ENCODE measurements at regions of chr15 and their contacts with region 1.

Region 1: GRCh38 chr15:92077353-92078085 is 224.0 kb downstream of the SLCO3A1 start:
- DNase-seq: peak; percentile 45 to 56
- ATAC-seq: peak; percentile 65 to 72
- H3K4me3 ChIP-seq: no peak overlapping the region
- H3K27ac ChIP-seq: no peak overlapping the region
- H3K4me1 ChIP-seq: peaks cover 7 to 9% of the 10 kb centered on the region in 2 donors
- H3K27me3 ChIP-seq: no peaks in the 10 kb centered on the region
- CTCF ChIP-seq: peak; percentile 45 to 68 (median 66)
- POLR2A ChIP-seq: no peak

Region 2: DNA sequence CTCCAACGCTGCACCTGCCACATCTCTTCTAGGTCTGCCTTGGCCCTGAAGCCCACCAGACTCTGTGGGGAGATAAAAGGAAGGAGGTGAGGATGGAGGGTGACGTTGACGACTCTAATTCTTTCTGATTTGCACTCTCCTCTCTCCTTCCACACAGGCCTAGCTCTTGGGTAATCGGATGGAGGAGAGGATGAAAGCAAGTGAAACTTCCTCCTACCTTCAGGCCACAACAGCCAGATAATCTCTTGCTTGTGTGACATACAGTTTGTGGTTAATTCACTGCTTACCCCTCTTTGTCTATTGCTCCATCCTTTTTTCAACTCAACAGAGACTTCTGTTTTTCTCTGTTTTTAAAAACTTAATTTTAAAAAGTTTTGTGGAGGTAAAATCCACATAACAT is 769.3 kb before region 1 on chr15:
- in situ Hi-C with region 1: loop called (anchors 5 to 10 kb)
- intact Hi-C with region 1: loop called (anchors 2 kb)
- DNase-seq: no peak
- ATAC-seq: no peak
- H3K4me3 ChIP-seq: no peak overlapping the region
- H3K27ac ChIP-seq: no peak overlapping the region
- H3K4me1 ChIP-seq: no peaks in the 10 kb centered on the region
- H3K27me3 ChIP-seq: peaks cover 2 to 18% (median 6%) of the 10 kb centered on the region in 3 donors
- CTCF ChIP-seq: no peak
- POLR2A ChIP-seq: no peak

Region 3: DNA sequence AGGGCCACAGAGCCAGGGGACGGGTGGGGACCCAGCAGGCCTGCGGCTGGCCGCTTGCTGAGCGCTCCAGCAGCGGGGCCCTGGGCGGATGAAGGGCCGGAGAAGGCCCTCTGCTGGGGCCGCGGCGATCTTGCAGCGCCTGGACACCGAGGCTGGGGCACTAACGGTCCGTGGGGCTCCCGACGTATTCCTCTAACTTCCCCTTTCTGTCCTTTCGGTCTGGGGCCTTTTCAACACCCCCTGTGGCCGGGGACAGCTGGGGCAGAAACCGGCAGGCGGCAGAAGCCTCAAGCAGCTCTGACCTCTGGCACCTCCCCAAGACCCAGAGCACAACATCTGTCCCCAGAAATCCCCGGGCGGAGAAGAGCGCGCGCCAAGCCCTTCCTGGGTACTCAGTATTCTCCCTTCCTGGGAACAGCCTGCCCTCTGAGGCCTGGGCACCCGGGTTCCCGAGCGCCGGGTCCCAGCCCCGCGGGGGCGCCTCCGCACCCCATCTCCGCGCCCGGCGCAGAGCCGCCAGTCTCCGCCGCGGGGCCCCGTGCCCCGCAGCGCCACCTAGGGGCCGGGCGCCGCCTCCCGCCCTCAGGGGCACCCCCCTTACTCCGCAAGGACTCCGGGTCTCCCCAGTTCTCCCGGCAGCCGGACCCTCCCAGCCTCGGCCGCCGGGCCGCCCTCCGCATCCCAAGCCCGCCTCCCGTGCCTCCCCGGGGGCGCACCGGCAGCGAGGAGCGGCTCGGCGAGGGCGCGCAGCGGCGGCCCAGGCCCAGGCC is 224.6 kb before region 1 on chr15:
- in situ Hi-C with region 1: loop called in 3 of 4 experiments (anchors 5 to 25 kb)
- intact Hi-C with region 1: loop called (anchors 1 kb)
- DNase-seq: peak; percentile 56 to 72
- ATAC-seq: peak; percentile 88
- H3K4me3 ChIP-seq: peak overlapping the region; percentile 56 to 84 (median 72)
- H3K27ac ChIP-seq: peak overlapping the region; percentile 78 to 89 (median 86)
- H3K4me1 ChIP-seq: peaks cover 11 to 22% of the 10 kb centered on the region in 2 donors
- H3K27me3 ChIP-seq: no peaks in the 10 kb centered on the region
- CTCF ChIP-seq: peak; percentile 61 to 94 (median 84)
- POLR2A ChIP-seq: no peak

Region 4: DNA sequence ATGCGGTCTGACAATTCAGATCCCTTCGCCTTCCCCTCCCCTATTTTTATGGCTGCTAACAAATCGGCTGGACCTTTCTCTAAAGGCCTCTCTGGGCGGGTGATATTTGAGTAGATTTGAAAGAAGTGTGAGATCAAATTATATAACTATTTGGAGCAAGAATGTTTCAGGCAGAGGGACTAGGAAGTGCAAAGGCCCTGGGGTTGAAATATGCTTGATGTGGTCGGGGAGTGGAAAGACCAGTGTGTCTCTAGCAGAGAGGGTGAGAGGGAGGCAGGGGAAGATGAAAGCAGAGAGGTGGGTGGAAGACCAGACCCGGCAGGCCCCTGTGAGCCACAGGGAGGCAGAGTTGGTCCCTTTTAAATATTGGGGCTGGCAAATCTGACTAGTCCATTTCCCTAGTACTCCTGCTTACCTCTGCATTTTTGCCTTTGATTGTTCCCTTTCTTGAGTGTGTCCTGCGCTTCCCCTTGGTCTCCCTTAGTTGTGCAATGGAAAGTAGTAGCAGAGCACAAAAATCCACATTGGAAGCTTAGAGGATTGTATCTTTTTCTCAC is 191.7 kb before region 1 on chr15:
- in situ Hi-C with region 1: no loop called
- intact Hi-C with region 1: loop called (anchors 10 kb)
- DNase-seq: no peak
- ATAC-seq: no peak
- H3K4me3 ChIP-seq: no peak overlapping the region
- H3K27ac ChIP-seq: no peak overlapping the region
- H3K4me1 ChIP-seq: peaks cover 14 to 15% of the 10 kb centered on the region in 2 donors
- H3K27me3 ChIP-seq: no peaks in the 10 kb centered on the region
- CTCF ChIP-seq: peak in 1 of 5 experiments; percentile 10
- POLR2A ChIP-seq: no peak

Region 5: GRCh38 chr15:91965501-91966184 is 111.9 kb before region 1 on chr15:
- in situ Hi-C with region 1: no loop called
- intact Hi-C with region 1: no loop called
- DNase-seq: no peak
- ATAC-seq: no peak
- H3K4me3 ChIP-seq: no peak overlapping the region
- H3K27ac ChIP-seq: peak overlapping the region in 2 of 4 donors; percentile 13 to 23
- H3K4me1 ChIP-seq: peaks cover 30 to 36% of the 10 kb centered on the region in 2 donors
- H3K27me3 ChIP-seq: no peaks in the 10 kb centered on the region
- CTCF ChIP-seq: no peak
- POLR2A ChIP-seq: no peak

Region 6: GRCh38 chr15:92000709-92001108 is 76.8 kb before region 1 on chr15:
- in situ Hi-C with region 1: no loop called
- intact Hi-C with region 1: no loop called
- DNase-seq: no peak
- ATAC-seq: no peak
- H3K4me3 ChIP-seq: no peak overlapping the region
- H3K27ac ChIP-seq: no peak overlapping the region
- H3K4me1 ChIP-seq: no peaks in the 10 kb centered on the region
- H3K27me3 ChIP-seq: no peaks in the 10 kb centered on the region
- CTCF ChIP-seq: no peak
- POLR2A ChIP-seq: no peak

Region 7: DNA sequence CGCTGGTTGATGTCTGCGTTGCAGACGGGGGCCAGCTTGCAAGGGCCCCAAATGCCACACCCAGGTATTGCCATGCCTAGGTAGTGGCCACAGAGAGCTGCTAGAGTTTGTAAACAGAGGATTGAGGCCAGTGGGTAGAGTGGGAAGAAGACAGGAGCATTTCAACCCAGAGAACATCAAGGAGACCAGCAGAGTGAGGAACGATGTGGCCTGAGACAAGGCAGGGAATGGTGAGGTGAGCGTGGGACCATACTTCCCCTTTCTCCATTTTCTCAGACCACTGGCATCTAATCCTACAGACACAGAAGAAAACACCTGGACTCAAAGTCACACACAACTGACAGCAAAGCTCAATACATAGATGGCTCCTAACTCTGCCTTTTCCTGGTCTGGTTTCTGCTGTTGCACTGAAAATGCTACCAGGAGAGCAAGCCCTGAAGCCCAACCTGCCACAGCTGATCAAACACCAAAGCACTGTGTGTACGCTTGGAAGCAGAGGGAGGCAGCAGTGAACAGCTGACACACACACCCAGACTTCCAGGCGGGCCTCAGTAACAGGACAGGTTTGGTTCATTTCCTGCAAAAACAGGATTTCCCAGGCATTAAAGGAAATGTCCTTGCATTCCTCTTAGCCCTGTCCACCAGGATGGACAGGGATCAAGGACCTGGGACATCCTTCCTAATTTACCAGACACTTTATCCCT is 576.5 kb after region 1 on chr15:
- in situ Hi-C with region 1: no loop called
- intact Hi-C with region 1: no loop called
- DNase-seq: no peak
- ATAC-seq: no peak
- H3K4me3 ChIP-seq: peak overlapping the region in 2 of 4 donors; percentile 60 to 65
- H3K27ac ChIP-seq: peak overlapping the region in 2 of 4 donors; percentile 60 to 79
- H3K4me1 ChIP-seq: peaks cover 0 to 4% of the 10 kb centered on the region in 2 donors
- H3K27me3 ChIP-seq: no peaks in the 10 kb centered on the region
- CTCF ChIP-seq: no peak
- POLR2A ChIP-seq: no peak

Region 8: GRCh38 chr15:92714477-92715401 is 637.2 kb after region 1 on chr15:
- in situ Hi-C with region 1: loop called in 3 of 4 experiments (anchors 25 kb)
- intact Hi-C with region 1: no loop called
- DNase-seq: peak; percentile 31 to 49
- ATAC-seq: peak; percentile 89 to 91
- H3K4me3 ChIP-seq: peak overlapping the region; percentile 63 to 89 (median 70)
- H3K27ac ChIP-seq: peak overlapping the region; percentile 39 to 64 (median 54)
- H3K4me1 ChIP-seq: peaks cover 7% of the 10 kb centered on the region in 2 donors
- H3K27me3 ChIP-seq: no peaks in the 10 kb centered on the region
- CTCF ChIP-seq: peak; percentile 76 to 95 (median 85)
- POLR2A ChIP-seq: no peak

Region 9: DNA sequence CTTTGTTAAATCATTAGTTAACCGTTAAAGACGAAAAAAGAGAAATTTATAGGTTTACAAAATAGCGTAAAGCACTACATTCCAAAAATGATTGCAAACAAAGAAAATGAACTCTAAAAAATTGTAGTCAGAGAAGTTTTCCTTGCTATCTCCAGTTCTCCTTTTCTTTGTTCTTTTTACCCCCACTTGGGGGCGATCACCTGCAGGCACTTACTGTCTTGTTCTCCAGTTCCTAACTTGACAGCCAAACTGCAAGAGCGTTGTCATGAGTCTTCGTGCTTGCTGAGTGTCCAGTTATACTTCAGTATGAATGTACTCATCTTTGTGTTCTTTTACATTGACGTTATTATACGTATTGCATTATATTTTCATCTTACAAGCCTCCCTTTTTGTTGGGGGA is 877.1 kb after region 1 on chr15:
- in situ Hi-C with region 1: no loop called
- intact Hi-C with region 1: no loop called
- DNase-seq: peak in 1 of 2 donors; percentile 67
- ATAC-seq: peak in 1 of 2 donors; percentile 95
- H3K4me3 ChIP-seq: no peak overlapping the region
- H3K27ac ChIP-seq: peak overlapping the region in 2 of 4 donors; percentile 29 to 79
- H3K4me1 ChIP-seq: peaks cover 21 to 24% of the 10 kb centered on the region in 2 donors
- H3K27me3 ChIP-seq: no peaks in the 10 kb centered on the region
- CTCF ChIP-seq: peak in 1 of 5 experiments; percentile 44
- POLR2A ChIP-seq: no peak

Measured in gastrocnemius medialis (tissue), 4 donors.